ENCODE measurements at regions of chr15 and their contacts with region 1.

Region 1: GRCh38 chr15:38129531-38130204 is 123.0 kb upstream of the SPRED1 start:
- DNase-seq: peak; percentile 90

Region 2: GRCh38 chr15:38072348-38073177 is 57.1 kb before region 1 on chr15:
- intact Hi-C with region 1: loop called in 1 of 2 experiments (anchors 5 kb)
- DNase-seq: peak; percentile 89

Region 3: DNA sequence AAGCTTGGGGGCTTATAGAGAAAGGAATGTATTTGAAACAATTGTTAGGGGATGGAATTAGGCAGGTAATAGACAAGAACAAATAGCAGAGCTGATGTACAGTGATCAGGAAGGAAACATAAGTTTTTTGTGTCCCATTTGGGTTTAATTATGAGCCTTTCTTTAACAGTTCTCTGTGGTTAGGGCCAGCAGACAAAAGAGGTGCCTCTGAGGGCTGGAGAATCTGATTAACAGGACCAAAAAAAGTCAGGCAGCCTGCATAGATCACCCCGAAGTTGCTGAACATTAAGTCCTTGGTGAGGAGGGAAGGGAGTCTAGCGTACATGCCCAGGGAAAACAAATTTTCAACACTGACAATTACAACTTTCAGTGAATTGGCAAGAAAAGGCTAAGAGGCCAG is 34.4 kb after region 1 on chr15:
- intact Hi-C with region 1: loop called in 1 of 2 experiments (anchors 2 kb)
- DNase-seq: no peak

Region 4: GRCh38 chr15:38252481-38253412 is 123.1 kb after region 1 on chr15 and contains the start of gene SPRED1:
- intact Hi-C with region 1: loop called in 1 of 2 experiments (anchors 5 kb)
- DNase-seq: peak; percentile 91
- total RNA-seq, gene SPRED1: 30.8 to 35.1 TPM

Measured in posterior vena cava (tissue), 2 donors.